Activated naive CD4-positive, alpha-beta T cell treated with anti-CD3 and anti-CD28 coated beads, Interleukin-2, amount 10 ng/mL, durations not matched to agents 7 days and 5 days (primary cell): ENCODE measurements at regions of chr7 and their contacts with region 1.

Region 1: DNA sequence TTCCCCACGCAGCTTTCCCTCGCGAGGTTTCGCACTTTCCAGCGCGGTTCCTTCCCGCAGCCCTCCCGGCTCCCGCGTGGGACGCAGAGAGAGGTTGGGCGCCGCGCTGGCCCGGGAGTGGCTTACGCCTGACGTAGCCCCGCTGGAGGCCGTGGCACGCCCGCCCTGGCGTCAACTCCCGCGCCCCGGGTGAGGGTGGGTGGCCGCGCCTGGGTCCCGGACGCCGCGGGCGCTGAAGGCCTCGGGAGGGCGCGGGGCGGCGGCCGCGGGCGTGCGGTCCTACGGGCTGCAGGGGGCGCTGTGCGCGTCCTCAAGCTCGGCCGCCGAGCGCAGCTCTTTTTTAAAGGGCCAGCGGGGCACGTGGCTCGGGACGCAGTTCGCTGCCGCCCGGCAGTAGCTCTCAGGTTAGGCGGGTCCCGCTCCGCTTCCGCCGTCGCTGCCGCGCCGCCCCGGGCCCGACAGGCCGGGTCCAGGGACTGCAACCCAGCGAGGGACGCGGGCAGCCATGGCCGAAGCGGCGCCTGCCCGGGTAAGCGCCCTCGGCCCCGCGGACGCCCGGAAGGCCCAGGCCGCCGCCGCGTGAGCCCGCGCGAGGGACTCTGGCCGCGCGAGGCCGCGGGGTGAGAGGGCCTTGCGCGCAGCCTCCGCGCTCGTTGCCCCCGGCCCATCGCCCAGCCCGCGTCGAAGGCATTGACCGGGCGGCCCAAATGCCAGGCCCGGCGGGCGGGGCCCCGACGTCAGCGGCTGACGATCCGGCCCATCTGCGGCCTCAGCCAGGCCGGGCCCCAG is at the start of gene ZNF783:
- DNase-seq: peak; percentile 88
- H3K4me3 Mint-ChIP-seq: peak within 1 kb of the TSS; percentile 75
- H3K27ac Mint-ChIP-seq: peak within 1 kb of the TSS; percentile 82
- H3K4me1 Mint-ChIP-seq: peaks cover 30% of the 10 kb centered on the region
- H3K27me3 Mint-ChIP-seq: no peaks in the 10 kb centered on the region

Region 2: DNA sequence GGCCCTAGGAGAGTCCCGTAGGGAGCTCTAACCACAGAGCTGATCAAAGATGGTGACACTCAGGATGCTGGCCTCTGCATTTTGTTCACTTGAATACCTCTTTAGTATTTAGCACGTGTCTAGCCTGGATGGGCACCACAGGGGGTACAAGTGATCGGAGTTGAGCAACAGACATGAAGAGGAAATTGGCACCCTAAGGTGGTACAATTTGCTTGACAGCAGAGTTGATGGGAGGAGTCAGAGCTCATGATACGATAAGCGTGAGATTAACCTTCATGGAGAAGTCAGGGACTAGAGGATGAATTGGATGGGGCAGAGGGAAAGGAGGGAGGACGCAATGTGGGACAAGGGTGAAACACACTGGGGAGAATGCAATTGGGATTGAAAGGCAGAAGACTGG is 32.5 kb before region 1 on chr7:
- CTCF ChIA-PET with region 1: no interaction called
- DNase-seq: no peak
- H3K4me3 Mint-ChIP-seq: no peak overlapping the region
- H3K27ac Mint-ChIP-seq: no peak overlapping the region
- H3K4me1 Mint-ChIP-seq: no peaks in the 10 kb centered on the region
- H3K27me3 Mint-ChIP-seq: peaks cover 23% of the 10 kb centered on the region

Region 3: GRCh38 chr7:149284850-149285626 is 23.0 kb after region 1 on chr7:
- CTCF ChIA-PET with region 1: interaction called, 10 read pairs
- DNase-seq: peak; percentile 99
- H3K4me3 Mint-ChIP-seq: peak overlapping the region; percentile 83
- H3K27ac Mint-ChIP-seq: peak overlapping the region; percentile 90
- H3K4me1 Mint-ChIP-seq: peaks cover 54% of the 10 kb centered on the region
- H3K27me3 Mint-ChIP-seq: peaks cover 4% of the 10 kb centered on the region